A549 (cell line): ENCODE measurements at regions of chr1 and their contacts with region 1.

Region 1: GRCh38 chr1:31977385-31978131 is 36.1 kb upstream of the KHDRBS1 start:
- DNase-seq: peak; percentile 50 to 65
- ATAC-seq: peak; percentile 97 to 99
- H3K4me3 ChIP-seq: no peak overlapping the region
- H3K27ac ChIP-seq: no peak overlapping the region
- H3K4me1 ChIP-seq: no peaks in the 10 kb centered on the region
- CTCF ChIP-seq: no peak
- EP300 ChIP-seq: no peak
- POLR2A ChIP-seq: no peak
- RAD21 ChIP-seq: peak in 1 of 2 experiments; percentile 36; a peak in 3 of 5 replicates

Region 2: DNA sequence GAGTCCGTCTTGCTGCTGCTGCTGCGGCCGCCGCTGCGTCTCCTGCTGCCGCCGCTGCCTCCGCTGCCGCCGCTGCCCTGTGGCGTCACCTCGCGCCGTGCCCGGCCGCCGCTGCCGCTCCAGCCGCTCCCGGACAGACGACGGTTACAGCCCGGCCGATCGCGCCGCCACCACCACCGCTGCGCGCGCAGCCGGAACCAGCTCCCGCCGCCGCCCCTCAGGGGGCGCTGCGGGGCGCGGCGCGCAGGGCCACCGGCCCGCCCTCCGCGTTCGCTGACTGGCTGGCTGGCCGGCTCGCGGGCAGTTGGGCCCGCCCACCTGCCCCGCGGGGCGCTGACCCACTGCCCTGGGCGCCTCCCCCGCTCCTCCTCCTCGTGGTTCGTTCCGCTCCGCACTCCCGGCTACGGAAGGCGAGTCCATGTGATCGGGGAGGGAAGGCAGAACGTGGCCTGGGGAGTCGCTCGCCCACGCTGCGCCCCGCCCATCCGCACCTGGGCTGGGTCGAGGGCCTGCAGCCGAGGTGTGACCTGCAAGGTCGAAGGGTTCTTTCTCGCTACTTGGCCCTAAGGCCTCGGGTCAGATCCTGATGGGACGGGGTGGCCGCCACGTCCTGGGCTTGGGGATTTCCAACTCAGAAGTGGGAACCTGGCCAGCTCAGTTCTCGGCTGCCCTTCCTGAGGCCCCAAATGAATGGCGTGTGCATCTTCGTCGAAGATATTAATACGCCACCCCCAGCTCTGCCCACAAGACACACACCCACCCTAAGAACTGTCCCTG is 39.2 kb before region 1 on chr1 and contains the start of gene PTP4A2:
- CTCF ChIA-PET with region 1: interaction called, 17 read pairs
- POLR2A ChIA-PET with region 1: no interaction called
- DNase-seq: peak; percentile 79 to 96
- ATAC-seq: peak; percentile 79 to 82
- H3K4me3 ChIP-seq: peak within 1 kb of the TSS; percentile 83
- H3K27ac ChIP-seq: peak within 1 kb of the TSS; percentile 99
- H3K4me1 ChIP-seq: peaks cover 66% of the 10 kb centered on the region
- CTCF ChIP-seq: peak; percentile 57
- EP300 ChIP-seq: no peak
- POLR2A ChIP-seq: peak; percentile 45
- RAD21 ChIP-seq: no peak
- polyA plus RNA-seq, gene PTP4A2: 504 and 563 TPM in 2 replicates

Region 3: GRCh38 chr1:32005522-32005921 is 28.0 kb after region 1 on chr1:
- CTCF ChIA-PET with region 1: interaction called, 10 read pairs
- POLR2A ChIA-PET with region 1: no interaction called
- DNase-seq: no peak
- ATAC-seq: no peak
- H3K4me3 ChIP-seq: no peak overlapping the region
- H3K27ac ChIP-seq: no peak overlapping the region
- H3K4me1 ChIP-seq: peaks cover 6% of the 10 kb centered on the region; the same call in 1 of the 3 replicates
- CTCF ChIP-seq: no peak
- EP300 ChIP-seq: no peak
- POLR2A ChIP-seq: no peak
- RAD21 ChIP-seq: no peak

Region 4: DNA sequence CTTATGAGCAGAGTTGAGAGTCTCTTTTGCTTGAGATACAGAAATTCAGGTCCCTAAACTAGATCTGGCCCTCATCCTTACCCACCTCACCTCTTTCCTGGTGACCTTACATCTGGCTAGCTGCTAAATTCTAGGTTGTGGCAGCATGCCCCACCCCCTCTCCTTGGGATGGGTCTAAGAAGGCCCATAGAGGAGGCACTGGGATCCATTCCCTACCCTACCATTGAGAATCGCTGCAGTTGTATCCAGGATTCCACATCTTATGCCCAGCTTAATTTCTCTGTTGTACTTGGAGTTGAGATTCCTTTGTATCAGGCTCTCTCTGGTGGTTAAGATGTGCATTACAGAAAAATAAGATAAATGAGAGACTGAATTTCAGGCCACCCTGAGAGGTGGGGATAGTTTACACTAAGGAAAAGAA is 85.7 kb after region 1 on chr1:
- CTCF ChIA-PET with region 1: interaction called, 12 read pairs
- POLR2A ChIA-PET with region 1: no interaction called
- DNase-seq: peak; percentile 43 to 63
- ATAC-seq: peak; percentile 77 to 81
- H3K4me3 ChIP-seq: no peak overlapping the region
- H3K27ac ChIP-seq: peak overlapping the region in 1 of 2 experiments; percentile 71; a peak in 3 of 6 replicates
- H3K4me1 ChIP-seq: peaks cover 16% of the 10 kb centered on the region
- CTCF ChIP-seq: peak; percentile 53
- EP300 ChIP-seq: no peak
- POLR2A ChIP-seq: no peak
- RAD21 ChIP-seq: peak; percentile 63 to 68

Region 5: GRCh38 chr1:32234792-32235191 is 257.2 kb after region 1 on chr1:
- CTCF ChIA-PET with region 1: no interaction called
- POLR2A ChIA-PET with region 1: no interaction called
- DNase-seq: peak in 1 of 2 experiments; percentile 24
- ATAC-seq: peak; percentile 36 to 40; a peak in 5 of 6 replicates
- H3K4me3 ChIP-seq: no peak overlapping the region
- H3K27ac ChIP-seq: peak overlapping the region; percentile 79 to 87
- H3K4me1 ChIP-seq: peaks cover 35% of the 10 kb centered on the region
- CTCF ChIP-seq: no peak
- EP300 ChIP-seq: no peak
- POLR2A ChIP-seq: no peak
- RAD21 ChIP-seq: no peak